ENCODE measurements at regions of chr6 and their contacts with region 1.

Region 1: DNA sequence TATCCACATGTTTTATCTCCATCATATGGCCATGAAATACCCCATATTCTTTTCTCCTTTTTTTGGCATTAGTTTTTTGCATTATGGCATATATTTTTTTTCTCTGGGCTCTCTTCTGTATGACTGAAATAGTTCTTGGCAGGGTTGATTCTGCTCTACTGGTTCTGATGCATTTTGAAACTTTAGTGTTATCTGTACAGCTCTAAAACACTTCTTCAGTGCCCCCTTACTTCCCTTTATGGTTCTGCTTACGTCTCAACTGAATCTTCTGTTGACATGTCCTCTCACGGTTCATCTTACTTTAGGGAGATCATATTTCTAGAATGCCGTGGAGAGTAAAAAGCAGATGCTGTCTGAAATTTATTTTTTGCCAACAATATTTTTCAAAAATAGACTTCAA is 23.2 kb upstream of the TXNDC5 start:
- DNase-seq: peak; percentile 75
- ATAC-seq: peak; percentile 94
- H3K4me3 ChIP-seq: no peak overlapping the region
- H3K4me3 Mint-ChIP-seq: peak overlapping the region; percentile 3
- H3K27ac ChIP-seq: peak overlapping the region; percentile 44 to 68
- H3K27ac Mint-ChIP-seq: peak overlapping the region; percentile 29
- H3K4me1 ChIP-seq: peaks cover 26 to 31% of the 10 kb centered on the region in 2 donors
- H3K4me1 Mint-ChIP-seq: peaks cover 32% of the 10 kb centered on the region
- H3K27me3 ChIP-seq: no peaks in the 10 kb centered on the region
- H3K27me3 Mint-ChIP-seq: no peaks in the 10 kb centered on the region
- CTCF ChIP-seq: no peak

Region 2: DNA sequence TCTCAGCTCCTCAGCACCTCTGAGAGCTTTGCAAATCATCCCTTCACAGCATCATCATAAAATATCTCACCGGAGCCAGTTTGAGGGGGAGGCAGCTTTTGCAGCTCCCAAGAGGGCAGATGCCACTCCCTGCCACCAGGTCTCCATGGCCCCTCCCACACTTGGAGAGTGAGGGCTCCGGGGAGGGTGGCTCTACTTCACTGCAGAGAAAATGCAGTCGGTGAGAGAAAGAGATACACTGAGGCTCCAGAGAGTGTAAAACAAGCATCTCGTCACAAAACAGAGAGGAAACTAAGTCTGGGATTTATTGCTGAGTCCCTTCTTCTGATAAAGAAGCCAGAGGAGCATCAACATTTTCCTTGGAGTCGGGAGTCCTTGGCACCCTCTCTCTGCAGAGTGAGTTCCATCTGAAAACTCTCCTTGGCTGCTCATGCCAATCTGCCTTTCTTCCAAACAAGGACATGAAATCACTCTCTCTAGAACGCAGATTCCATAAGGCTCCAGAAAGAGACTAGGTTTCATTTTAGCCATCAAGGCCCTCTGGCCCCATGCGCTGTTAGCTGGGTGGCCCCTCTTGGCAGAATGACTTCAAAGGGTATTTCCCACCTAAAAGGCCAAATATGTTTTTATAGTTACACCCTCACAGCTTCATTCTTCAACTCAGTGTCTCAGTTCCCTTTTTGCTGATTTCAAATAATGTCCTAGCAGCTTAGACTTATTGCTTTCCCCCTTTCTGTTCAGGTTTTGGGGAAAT is 1542.8 kb before region 1 on chr6:
- CTCF ChIA-PET with region 1: no interaction called
- POLR2A ChIA-PET with region 1: no interaction called
- intact Hi-C with region 1: no loop called
- DNase-seq: peak; percentile 81
- ATAC-seq: peak; percentile 75
- H3K4me3 ChIP-seq: peak overlapping the region in 3 of 5 experiments; percentile 3 to 36 (median 26)
- H3K4me3 Mint-ChIP-seq: peak overlapping the region; percentile 87
- H3K27ac ChIP-seq: peak overlapping the region; percentile 83 to 92
- H3K27ac Mint-ChIP-seq: peak overlapping the region; percentile 97
- H3K4me1 ChIP-seq: peaks cover 37 to 44% of the 10 kb centered on the region in 2 donors
- H3K4me1 Mint-ChIP-seq: peaks cover 58% of the 10 kb centered on the region
- H3K27me3 ChIP-seq: no peaks in the 10 kb centered on the region
- H3K27me3 Mint-ChIP-seq: peaks cover 3% of the 10 kb centered on the region
- CTCF ChIP-seq: no peak

Region 3: GRCh38 chr6:7916959-7917358 is 16.8 kb before region 1 on chr6:
- CTCF ChIA-PET with region 1: interaction called, 3 read pairs
- POLR2A ChIA-PET with region 1: interaction called, 3 read pairs
- intact Hi-C with region 1: loop called (anchors 2 kb)
- DNase-seq: peak; percentile 76
- ATAC-seq: peak; percentile 66
- H3K4me3 ChIP-seq: peak overlapping the region in 1 of 5 experiments; percentile 36
- H3K4me3 Mint-ChIP-seq: peak overlapping the region; percentile 63
- H3K27ac ChIP-seq: peak overlapping the region; percentile 79 to 95
- H3K27ac Mint-ChIP-seq: no peak overlapping the region
- H3K4me1 ChIP-seq: peaks cover 40 to 82% of the 10 kb centered on the region in 2 donors
- H3K4me1 Mint-ChIP-seq: peaks cover 19% of the 10 kb centered on the region
- H3K27me3 ChIP-seq: no peaks in the 10 kb centered on the region
- H3K27me3 Mint-ChIP-seq: no peaks in the 10 kb centered on the region
- CTCF ChIP-seq: no peak